ENCODE measurements at regions of chr11 and their contacts with region 1.

Region 1: DNA sequence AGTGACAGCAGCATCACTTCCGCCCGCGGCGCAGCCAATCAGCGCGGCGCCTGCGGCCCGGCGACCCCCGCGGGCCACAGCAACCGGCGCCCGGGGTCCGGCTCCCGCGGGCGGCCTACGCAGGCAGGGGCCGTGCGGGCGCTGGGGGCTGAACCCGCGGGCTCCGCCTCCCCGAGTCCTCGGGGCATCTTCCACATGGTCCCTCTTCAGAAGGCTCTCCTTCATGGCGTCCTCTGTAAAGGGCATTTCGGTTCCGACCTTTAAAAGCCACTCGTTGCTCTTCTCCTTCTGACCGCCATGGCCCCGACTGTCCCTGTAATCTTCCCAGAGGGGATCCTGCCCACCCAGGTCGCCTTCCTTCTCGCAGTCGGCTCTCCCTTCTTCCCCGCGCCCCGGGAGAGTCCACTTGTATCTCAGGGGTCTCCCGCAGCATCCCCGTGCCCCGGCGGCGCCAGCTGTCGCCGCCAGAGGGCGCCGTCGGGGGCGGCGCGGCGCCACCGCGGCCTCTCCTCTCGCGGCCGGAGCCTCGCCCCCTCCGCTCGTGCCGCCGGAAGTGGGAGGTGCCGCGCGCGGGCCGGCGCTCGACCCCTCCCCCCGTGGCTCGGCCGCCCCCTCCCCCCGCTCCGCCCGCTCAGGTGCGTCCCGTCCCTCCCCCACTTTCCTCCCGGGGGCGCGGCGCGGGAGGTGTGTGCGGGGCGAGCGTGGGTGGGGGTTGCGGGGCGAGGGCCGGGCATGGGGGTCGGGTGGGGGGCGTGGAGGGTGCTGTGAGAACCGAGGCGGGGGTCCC is at the start of gene RNF214:
- DNase-seq: peak; percentile 81
- H3K4me3 Mint-ChIP-seq: peak within 1 kb of the TSS; percentile 100
- H3K27ac Mint-ChIP-seq: peak within 1 kb of the TSS; percentile 100
- H3K4me1 Mint-ChIP-seq: peaks cover 42% of the 10 kb centered on the region
- H3K27me3 Mint-ChIP-seq: no peaks in the 10 kb centered on the region
- total RNA-seq, gene RNF214: 23.1 to 23.6 TPM

Region 2: GRCh38 chr11:117143871-117144476 is 88.3 kb before region 1 on chr11 and contains the start of gene PAFAH1B2:
- CTCF ChIA-PET with region 1: interaction called, 12 read pairs
- POLR2A ChIA-PET with region 1: interaction called, 32 read pairs
- DNase-seq: peak; percentile 95
- H3K4me3 Mint-ChIP-seq: peak within 1 kb of the TSS; percentile 96
- H3K27ac Mint-ChIP-seq: peak within 1 kb of the TSS; percentile 86
- H3K4me1 Mint-ChIP-seq: peaks cover 45% of the 10 kb centered on the region
- H3K27me3 Mint-ChIP-seq: peaks cover 17% of the 10 kb centered on the region
- total RNA-seq, gene PAFAH1B2: 60.1 to 62.8 TPM

Region 3: GRCh38 chr11:117178210-117179034 is 53.9 kb before region 1 on chr11 and contains the start of gene SIDT2:
- CTCF ChIA-PET with region 1: interaction called, 95 read pairs
- POLR2A ChIA-PET with region 1: interaction called, 42 read pairs
- DNase-seq: peak; percentile 93
- H3K4me3 Mint-ChIP-seq: peak within 1 kb of the TSS; percentile 92
- H3K27ac Mint-ChIP-seq: peak within 1 kb of the TSS; percentile 85
- H3K4me1 Mint-ChIP-seq: peaks cover 32% of the 10 kb centered on the region
- H3K27me3 Mint-ChIP-seq: no peaks in the 10 kb centered on the region
- total RNA-seq, gene SIDT2: 38.1 to 42.9 TPM

Region 4: GRCh38 chr11:117281159-117281558 is 48.9 kb after region 1 on chr11:
- CTCF ChIA-PET with region 1: interaction called, 7 read pairs
- POLR2A ChIA-PET with region 1: interaction called, 29 read pairs
- DNase-seq: no peak
- H3K4me3 Mint-ChIP-seq: no peak overlapping the region
- H3K27ac Mint-ChIP-seq: no peak overlapping the region
- H3K4me1 Mint-ChIP-seq: peaks cover 33% of the 10 kb centered on the region
- H3K27me3 Mint-ChIP-seq: no peaks in the 10 kb centered on the region

Region 5: GRCh38 chr11:117292616-117293015 is 60.3 kb after region 1 on chr11:
- CTCF ChIA-PET with region 1: no interaction called
- POLR2A ChIA-PET with region 1: no interaction called
- DNase-seq: no peak
- H3K4me3 Mint-ChIP-seq: no peak overlapping the region
- H3K27ac Mint-ChIP-seq: no peak overlapping the region
- H3K4me1 Mint-ChIP-seq: peaks cover 4% of the 10 kb centered on the region
- H3K27me3 Mint-ChIP-seq: no peaks in the 10 kb centered on the region

Region 6: GRCh38 chr11:117327567-117328374 is 95.5 kb after region 1 on chr11 and contains the start of gene CEP164:
- CTCF ChIA-PET with region 1: interaction called, 22 read pairs
- POLR2A ChIA-PET with region 1: interaction called, 55 read pairs
- DNase-seq: peak; percentile 96
- H3K4me3 Mint-ChIP-seq: peak within 1 kb of the TSS; percentile 58
- H3K27ac Mint-ChIP-seq: no peak within 1 kb of the TSS
- H3K4me1 Mint-ChIP-seq: peaks cover 13% of the 10 kb centered on the region
- H3K27me3 Mint-ChIP-seq: peaks cover 4% of the 10 kb centered on the region
- total RNA-seq, gene CEP164: 41.4 to 45.6 TPM